ENCODE measurements at regions of chr22 and their contacts with region 1.

Region 1: GRCh38 chr22:40525249-40525884 is 111.2 kb downstream of the MRTFA start:
- DNase-seq: peak; percentile 67 to 85 (median 73)
- ATAC-seq: peak; percentile 82
- H3K4me3 ChIP-seq: no peak overlapping the region
- H3K4me3 Mint-ChIP-seq: no peak overlapping the region
- H3K27ac ChIP-seq: no peak overlapping the region
- H3K27ac Mint-ChIP-seq: peak overlapping the region; percentile 22
- H3K4me1 ChIP-seq: peaks cover 18% of the 10 kb centered on the region
- H3K4me1 Mint-ChIP-seq: peaks cover 55% of the 10 kb centered on the region
- H3K27me3 ChIP-seq: no peaks in the 10 kb centered on the region
- H3K27me3 Mint-ChIP-seq: no peaks in the 10 kb centered on the region
- CTCF ChIP-seq: peak; percentile 97

Region 2: GRCh38 chr22:40572976-40573375 is 47.6 kb after region 1 on chr22:
- CTCF ChIA-PET with region 1: interaction called, 3 read pairs
- POLR2A ChIA-PET with region 1: no interaction called
- intact Hi-C with region 1: loop called in 1 of 2 experiments (anchors 10 kb)
- DNase-seq: no peak
- ATAC-seq: no peak
- H3K4me3 ChIP-seq: no peak overlapping the region
- H3K4me3 Mint-ChIP-seq: no peak overlapping the region
- H3K27ac ChIP-seq: no peak overlapping the region
- H3K27ac Mint-ChIP-seq: no peak overlapping the region
- H3K4me1 ChIP-seq: peaks cover 2% of the 10 kb centered on the region
- H3K4me1 Mint-ChIP-seq: peaks cover 22% of the 10 kb centered on the region
- H3K27me3 ChIP-seq: no peaks in the 10 kb centered on the region
- H3K27me3 Mint-ChIP-seq: no peaks in the 10 kb centered on the region
- CTCF ChIP-seq: no peak

Region 3: GRCh38 chr22:40645579-40646197 is 120.3 kb after region 1 on chr22:
- CTCF ChIA-PET with region 1: interaction called, 26 read pairs
- POLR2A ChIA-PET with region 1: interaction called, 5 read pairs
- intact Hi-C with region 1: loop called (anchors 1 kb)
- DNase-seq: no peak
- ATAC-seq: no peak
- H3K4me3 ChIP-seq: no peak overlapping the region
- H3K4me3 Mint-ChIP-seq: no peak overlapping the region
- H3K27ac ChIP-seq: no peak overlapping the region
- H3K27ac Mint-ChIP-seq: no peak overlapping the region
- H3K4me1 ChIP-seq: peaks cover 15% of the 10 kb centered on the region
- H3K4me1 Mint-ChIP-seq: peaks cover 16% of the 10 kb centered on the region
- H3K27me3 ChIP-seq: no peaks in the 10 kb centered on the region
- H3K27me3 Mint-ChIP-seq: no peaks in the 10 kb centered on the region
- CTCF ChIP-seq: no peak

Region 4: DNA sequence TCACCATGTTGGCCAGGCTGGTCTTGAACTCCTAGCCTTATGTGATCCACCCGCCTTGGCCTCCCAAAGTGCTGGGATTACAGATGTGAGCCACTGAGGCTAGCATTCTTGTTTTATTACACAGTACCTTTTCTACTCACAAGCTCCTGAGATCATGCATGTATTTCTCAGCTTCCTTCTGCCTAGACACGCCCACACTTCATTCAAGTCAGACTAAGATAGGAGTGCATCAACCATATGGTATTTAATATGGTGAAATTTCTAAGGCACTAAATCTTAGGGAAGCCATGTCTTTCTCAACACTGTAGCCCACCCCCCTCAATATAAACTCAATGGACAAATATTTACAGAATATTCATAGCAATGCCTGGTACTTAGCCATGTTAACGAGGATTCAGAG is 231.7 kb after region 1 on chr22:
- CTCF ChIA-PET with region 1: no interaction called
- POLR2A ChIA-PET with region 1: no interaction called
- intact Hi-C with region 1: loop called in 1 of 2 experiments (anchors 5 kb)
- DNase-seq: no peak
- ATAC-seq: no peak
- H3K4me3 ChIP-seq: no peak overlapping the region
- H3K4me3 Mint-ChIP-seq: no peak overlapping the region
- H3K27ac ChIP-seq: no peak overlapping the region
- H3K27ac Mint-ChIP-seq: no peak overlapping the region
- H3K4me1 ChIP-seq: no peaks in the 10 kb centered on the region
- H3K4me1 Mint-ChIP-seq: peaks cover 6% of the 10 kb centered on the region
- H3K27me3 ChIP-seq: no peaks in the 10 kb centered on the region
- H3K27me3 Mint-ChIP-seq: no peaks in the 10 kb centered on the region
- CTCF ChIP-seq: no peak